IMR-90 (cell line): ENCODE measurements at regions of chr10 and their contacts with region 1.

Region 1: GRCh38 chr10:24503461-24504320 is 220.0 kb downstream of the ARHGAP21 start:
- DNase-seq: peak; percentile 90
- ATAC-seq: peak; percentile 95
- H3K4me3 ChIP-seq: no peak overlapping the region
- H3K27ac ChIP-seq: peak overlapping the region; percentile 2; the same call in 1 of the 2 replicates
- H3K4me1 ChIP-seq: peaks cover 4% of the 10 kb centered on the region; the same call in 1 of the 2 replicates
- H3K27me3 ChIP-seq: no peaks in the 10 kb centered on the region
- CTCF ChIP-seq: peak; percentile 68
- POLR2A ChIP-seq: no peak
- RAD21 ChIP-seq: peak; percentile 88

Region 2: GRCh38 chr10:23314835-23315239 is 1188.9 kb before region 1 on chr10:
- CTCF ChIA-PET with region 1: no interaction called
- POLR2A ChIA-PET with region 1: no interaction called
- dilution Hi-C with region 1: no loop called
- in situ Hi-C with region 1: loop called (anchors 25 kb)
- intact Hi-C with region 1: no loop called
- DNase-seq: peak; percentile 88
- ATAC-seq: peak; percentile 76
- H3K4me3 ChIP-seq: no peak overlapping the region
- H3K27ac ChIP-seq: no peak overlapping the region
- H3K4me1 ChIP-seq: peaks cover 6% of the 10 kb centered on the region; the same call in 1 of the 2 replicates
- H3K27me3 ChIP-seq: no peaks in the 10 kb centered on the region; the same call in 1 of the 2 replicates
- CTCF ChIP-seq: peak; percentile 80
- POLR2A ChIP-seq: no peak
- RAD21 ChIP-seq: peak; percentile 87

Region 3: DNA sequence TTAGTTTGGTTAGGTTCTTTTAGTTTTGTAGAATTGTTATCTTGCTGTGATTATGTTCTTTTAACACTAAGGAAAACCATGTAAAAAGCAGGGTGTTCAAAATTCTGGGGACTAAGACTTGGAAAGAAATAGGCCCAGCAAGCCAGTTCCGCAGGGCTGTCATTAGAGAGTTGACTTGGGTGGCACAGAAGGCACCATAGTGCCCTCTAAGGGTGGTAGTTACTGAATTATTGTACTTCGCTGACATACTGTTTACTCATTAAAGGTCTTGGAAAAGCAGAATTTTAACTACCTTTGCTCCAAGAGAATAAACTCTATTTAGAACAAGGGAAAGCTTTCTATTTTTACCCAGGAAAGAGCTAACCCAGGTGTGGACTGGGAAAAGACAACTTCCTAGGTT is 978.3 kb before region 1 on chr10:
- CTCF ChIA-PET with region 1: no interaction called
- POLR2A ChIA-PET with region 1: no interaction called
- dilution Hi-C with region 1: no loop called
- in situ Hi-C with region 1: loop called (anchors 25 kb)
- intact Hi-C with region 1: no loop called
- DNase-seq: peak; percentile 7
- ATAC-seq: peak; percentile 71
- H3K4me3 ChIP-seq: no peak overlapping the region
- H3K27ac ChIP-seq: no peak overlapping the region
- H3K4me1 ChIP-seq: no peaks in the 10 kb centered on the region
- H3K27me3 ChIP-seq: no peaks in the 10 kb centered on the region
- CTCF ChIP-seq: peak; percentile 39
- POLR2A ChIP-seq: no peak
- RAD21 ChIP-seq: peak; percentile 51

Region 4: DNA sequence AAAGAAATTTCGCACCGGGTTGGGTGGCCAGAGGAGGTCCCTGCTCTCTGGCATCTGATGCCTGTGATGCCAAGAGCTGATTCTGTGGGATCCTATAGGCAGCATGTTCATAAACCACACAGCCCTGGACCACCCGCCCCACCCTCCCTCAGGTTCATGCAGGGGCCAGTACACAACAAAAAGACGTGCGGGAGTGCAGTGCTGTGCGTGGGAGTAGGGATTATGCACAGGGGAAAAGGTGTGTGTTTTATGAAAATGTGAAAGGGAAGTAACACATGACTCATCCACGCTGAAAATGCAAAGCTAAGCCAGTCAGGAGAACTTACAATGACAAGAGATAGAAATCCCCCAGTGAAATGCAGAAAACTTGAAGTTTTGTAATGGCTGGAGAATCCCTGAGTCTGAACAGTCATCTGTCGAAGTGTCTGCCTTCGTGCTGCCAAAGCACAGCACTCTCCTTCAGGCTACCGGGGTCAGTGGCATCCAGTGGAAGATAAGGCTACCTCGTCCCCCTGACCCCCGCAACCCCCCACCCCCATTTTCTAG is 293.7 kb before region 1 on chr10:
- CTCF ChIA-PET with region 1: no interaction called
- POLR2A ChIA-PET with region 1: no interaction called
- dilution Hi-C with region 1: no loop called
- in situ Hi-C with region 1: loop called (anchors 10 kb)
- intact Hi-C with region 1: no loop called
- DNase-seq: peak; percentile 71
- ATAC-seq: peak; percentile 35
- H3K4me3 ChIP-seq: no peak overlapping the region
- H3K27ac ChIP-seq: no peak overlapping the region
- H3K4me1 ChIP-seq: peaks cover 4% of the 10 kb centered on the region; the same call in 1 of the 2 replicates
- H3K27me3 ChIP-seq: peaks cover 3% of the 10 kb centered on the region
- CTCF ChIP-seq: no peak
- POLR2A ChIP-seq: no peak
- RAD21 ChIP-seq: no peak

Region 5: DNA sequence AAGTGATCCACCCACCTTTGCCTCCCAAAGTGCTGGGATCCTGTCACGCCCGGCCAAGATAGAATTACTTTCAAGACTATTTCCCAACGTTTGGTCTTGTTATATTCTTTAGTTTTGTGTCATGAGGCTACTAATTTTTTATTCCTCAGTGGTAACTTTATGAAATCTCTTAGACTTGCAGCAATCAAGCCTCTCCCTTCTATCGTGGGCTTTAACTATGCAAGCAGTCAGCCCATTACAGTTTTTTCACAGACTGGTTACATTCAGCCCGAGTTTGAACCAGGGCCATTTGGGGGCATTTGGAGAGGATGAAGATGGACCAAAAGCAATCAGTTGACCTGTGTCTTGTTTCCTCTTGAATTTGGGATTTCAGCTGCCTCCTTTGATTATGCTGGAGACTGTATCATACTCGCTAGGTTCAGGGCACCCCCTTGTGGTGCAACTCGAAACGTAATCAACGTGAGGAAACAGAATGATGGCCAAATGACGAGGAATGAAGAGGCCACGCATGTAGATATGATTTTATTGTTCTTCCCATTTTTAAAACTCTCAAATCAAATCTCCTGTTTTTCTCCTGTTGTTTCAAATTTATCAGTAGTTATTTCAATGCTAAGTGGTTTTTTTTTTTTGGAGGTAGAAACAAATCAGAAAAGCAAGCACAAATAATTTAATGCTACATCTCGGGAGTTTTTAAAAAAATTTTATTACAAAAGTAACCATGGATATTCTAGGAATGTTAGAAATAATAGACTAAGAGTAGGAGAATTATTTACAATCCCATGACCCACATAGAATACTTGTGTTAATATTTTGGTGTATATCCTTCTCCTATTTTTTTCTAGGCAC is 143.2 kb before region 1 on chr10:
- CTCF ChIA-PET with region 1: no interaction called
- POLR2A ChIA-PET with region 1: no interaction called
- dilution Hi-C with region 1: no loop called
- in situ Hi-C with region 1: loop called (anchors 10 kb)
- intact Hi-C with region 1: loop called (anchors 1 kb)
- DNase-seq: peak; percentile 73
- ATAC-seq: peak; percentile 88
- H3K4me3 ChIP-seq: no peak overlapping the region
- H3K27ac ChIP-seq: no peak overlapping the region
- H3K4me1 ChIP-seq: no peaks in the 10 kb centered on the region
- H3K27me3 ChIP-seq: no peaks in the 10 kb centered on the region
- CTCF ChIP-seq: peak; percentile 79
- POLR2A ChIP-seq: no peak
- RAD21 ChIP-seq: peak; percentile 90

Region 6: DNA sequence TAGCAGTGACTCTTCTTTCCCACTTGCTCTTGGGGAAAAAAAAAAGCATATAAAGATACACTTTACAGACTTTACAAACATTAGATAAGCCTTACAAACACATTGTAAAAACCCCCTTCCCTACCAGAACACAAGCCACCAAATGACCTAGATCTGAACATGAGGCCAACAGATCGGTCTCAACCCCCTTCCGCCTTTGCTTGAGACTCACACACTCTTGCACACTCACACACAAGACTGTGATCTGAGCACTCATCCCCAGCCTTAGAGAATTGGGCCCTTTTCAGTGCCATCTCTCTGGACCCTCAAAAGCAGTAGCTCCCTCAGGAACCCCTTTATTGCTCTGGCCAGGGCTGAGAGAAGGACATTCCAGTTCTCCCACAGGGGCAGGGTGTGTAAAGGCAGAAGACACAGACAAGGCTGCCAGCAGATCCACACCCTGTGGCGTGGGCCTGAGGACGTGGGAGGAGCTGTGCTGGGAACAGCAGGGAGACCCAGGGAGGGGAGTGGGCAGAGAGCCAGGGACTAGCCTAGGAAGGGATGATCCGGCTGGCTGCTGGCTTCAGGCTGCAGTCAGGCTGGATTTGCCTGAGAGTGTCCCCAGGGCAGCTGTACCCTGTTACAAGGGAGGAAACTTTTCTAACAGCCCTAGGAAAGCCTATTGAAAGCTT is 88.1 kb before region 1 on chr10:
- CTCF ChIA-PET with region 1: no interaction called
- POLR2A ChIA-PET with region 1: no interaction called
- dilution Hi-C with region 1: no loop called
- in situ Hi-C with region 1: no loop called
- intact Hi-C with region 1: loop called (anchors 1 kb)
- DNase-seq: peak; percentile 22
- ATAC-seq: peak; percentile 72
- H3K4me3 ChIP-seq: no peak overlapping the region
- H3K27ac ChIP-seq: no peak overlapping the region
- H3K4me1 ChIP-seq: peaks cover 8% of the 10 kb centered on the region; the same call in 1 of the 2 replicates
- H3K27me3 ChIP-seq: peaks cover 7% of the 10 kb centered on the region
- CTCF ChIP-seq: no peak
- POLR2A ChIP-seq: no peak
- RAD21 ChIP-seq: no peak

Region 7: GRCh38 chr10:24465891-24466818 is 37.5 kb before region 1 on chr10:
- CTCF ChIA-PET with region 1: no interaction called
- POLR2A ChIA-PET with region 1: no interaction called
- dilution Hi-C with region 1: no loop called
- in situ Hi-C with region 1: no loop called
- intact Hi-C with region 1: loop called (anchors 5 kb)
- DNase-seq: peak; percentile 96
- ATAC-seq: peak; percentile 69
- H3K4me3 ChIP-seq: peak overlapping the region; percentile 81
- H3K27ac ChIP-seq: peak overlapping the region; percentile 72
- H3K4me1 ChIP-seq: peaks cover 23% of the 10 kb centered on the region
- H3K27me3 ChIP-seq: no peaks in the 10 kb centered on the region
- CTCF ChIP-seq: no peak
- POLR2A ChIP-seq: peak; percentile 88
- RAD21 ChIP-seq: 0 out of 2 replicates have a peak, but pooled peaks have one; percentile 8

Region 8: GRCh38 chr10:24669285-24669852 is 165.7 kb after region 1 on chr10:
- CTCF ChIA-PET with region 1: no interaction called
- POLR2A ChIA-PET with region 1: no interaction called
- dilution Hi-C with region 1: no loop called
- in situ Hi-C with region 1: no loop called
- intact Hi-C with region 1: no loop called
- DNase-seq: no peak
- ATAC-seq: no peak
- H3K4me3 ChIP-seq: no peak overlapping the region
- H3K27ac ChIP-seq: no peak overlapping the region
- H3K4me1 ChIP-seq: no peaks in the 10 kb centered on the region
- H3K27me3 ChIP-seq: no peaks in the 10 kb centered on the region
- CTCF ChIP-seq: no peak
- POLR2A ChIP-seq: no peak
- RAD21 ChIP-seq: no peak